ENCODE measurements at regions of chr11 and their contacts with region 1.

Region 1: GRCh38 chr11:108222686-108223448 is at the start of gene ATM:
- DNase-seq: peak; percentile 99 to 100
- ATAC-seq: peak; percentile 91 to 92
- H3K4me3 ChIP-seq: peak within 1 kb of the TSS; percentile 59 to 92 (median 88)
- H3K27ac ChIP-seq: peak within 1 kb of the TSS; percentile 86 to 99 (median 96)
- H3K4me1 ChIP-seq: peaks cover 27 to 40% of the 10 kb centered on the region in 2 donors
- H3K27me3 ChIP-seq: no peaks in the 10 kb centered on the region
- CTCF ChIP-seq: peak; percentile 38 to 77 (median 56)
- POLR2A ChIP-seq: peak; percentile 6 to 33
- total RNA-seq, gene ATM: 9.3 to 21.6 (median 15.9) TPM

Region 2: DNA sequence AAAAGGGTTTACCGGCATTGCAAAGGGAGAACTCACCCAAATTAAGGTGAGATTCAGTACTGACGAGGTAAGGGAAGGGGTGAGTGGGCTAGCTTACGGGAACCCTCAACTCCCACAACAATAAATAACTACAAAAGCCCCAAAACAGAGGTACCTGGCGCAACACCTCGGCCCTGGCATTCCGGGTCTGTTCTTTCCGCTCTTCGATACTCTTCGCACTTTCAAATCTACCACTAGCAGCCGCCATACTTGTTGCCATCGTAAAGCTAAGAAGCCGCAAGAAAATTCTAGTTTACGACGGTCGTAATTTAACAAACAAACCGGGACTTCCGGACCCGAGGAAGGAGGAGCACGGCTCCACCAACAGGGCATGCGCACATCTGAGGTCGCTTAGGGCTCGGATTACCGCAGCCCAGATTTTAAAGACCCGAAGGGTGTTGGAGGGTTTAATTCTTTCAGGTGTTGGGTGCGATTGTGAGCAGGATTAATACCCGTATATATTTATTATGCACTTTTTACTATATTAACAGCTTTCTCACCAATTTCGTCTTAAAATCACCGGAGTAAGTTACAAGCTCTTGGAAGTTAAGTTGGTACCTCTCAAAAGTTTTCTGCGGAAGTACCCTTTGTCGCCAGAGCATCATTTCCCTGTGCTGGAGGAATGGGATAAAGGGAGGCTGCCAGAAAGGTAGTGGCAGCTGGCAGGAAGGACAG is 765.2 kb before region 1 on chr11 and contains the start of gene CWF19L2:
- in situ Hi-C with region 1: no loop called
- intact Hi-C with region 1: loop called (anchors 10 kb)
- DNase-seq: peak; percentile 77 to 87
- ATAC-seq: peak; percentile 100
- H3K4me3 ChIP-seq: peak within 1 kb of the TSS; percentile 76 to 92 (median 82)
- H3K27ac ChIP-seq: peak within 1 kb of the TSS; percentile 78 to 85 (median 80)
- H3K4me1 ChIP-seq: peaks cover 13 to 17% of the 10 kb centered on the region in 2 donors
- H3K27me3 ChIP-seq: no peaks in the 10 kb centered on the region
- CTCF ChIP-seq: peak in 1 of 5 experiments; percentile 11
- POLR2A ChIP-seq: no peak
- total RNA-seq, gene CWF19L2: 6.5 to 17.4 (median 9.8) TPM

Region 3: GRCh38 chr11:107713009-107713408 is 509.9 kb before region 1 on chr11:
- in situ Hi-C with region 1: no loop called
- intact Hi-C with region 1: loop called (anchors 5 kb)
- DNase-seq: no peak
- ATAC-seq: peak; percentile 50 to 63
- H3K4me3 ChIP-seq: peak overlapping the region; percentile 46 to 74 (median 54)
- H3K27ac ChIP-seq: peak overlapping the region; percentile 83 to 93 (median 86)
- H3K4me1 ChIP-seq: peaks cover 25 to 38% of the 10 kb centered on the region in 2 donors
- H3K27me3 ChIP-seq: no peaks in the 10 kb centered on the region
- CTCF ChIP-seq: no peak
- POLR2A ChIP-seq: no peak

Region 4: GRCh38 chr11:108121274-108122155 is 101.4 kb before region 1 on chr11 and contains the start of gene ACAT1:
- in situ Hi-C with region 1: loop called in 2 of 4 experiments (anchors 10 kb)
- intact Hi-C with region 1: loop called (anchors 1 kb)
- DNase-seq: peak; percentile 96 to 99
- ATAC-seq: peak; percentile 72 to 82
- H3K4me3 ChIP-seq: peak within 1 kb of the TSS; percentile 63 to 84 (median 76)
- H3K27ac ChIP-seq: peak within 1 kb of the TSS; percentile 89 to 99 (median 93)
- H3K4me1 ChIP-seq: peaks cover 34 to 42% of the 10 kb centered on the region in 2 donors
- H3K27me3 ChIP-seq: no peaks in the 10 kb centered on the region
- CTCF ChIP-seq: peak; percentile 39 to 84 (median 60)
- POLR2A ChIP-seq: peak; percentile 98
- total RNA-seq, gene ACAT1: 288 to 950 (median 605) TPM

Region 5: DNA sequence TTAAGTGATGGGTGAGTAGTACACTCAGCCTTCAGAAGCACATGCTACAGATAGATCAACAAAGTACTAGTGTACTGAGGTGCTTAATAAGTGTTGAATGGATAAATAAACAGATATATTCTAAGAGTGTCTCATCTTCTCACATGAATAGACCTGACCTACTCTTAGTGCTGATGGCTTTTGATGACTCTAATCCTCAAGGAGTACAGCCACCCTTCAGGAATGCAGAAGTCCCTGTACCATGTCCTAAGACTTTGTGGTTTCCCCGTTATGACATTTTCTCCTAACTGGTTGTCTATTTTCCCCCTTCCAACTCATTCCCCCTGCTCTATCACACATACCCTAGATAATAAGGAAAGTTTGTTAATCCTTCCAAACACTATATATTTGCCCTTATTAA is 182.8 kb after region 1 on chr11:
- in situ Hi-C with region 1: no loop called
- intact Hi-C with region 1: no loop called
- DNase-seq: no peak
- ATAC-seq: no peak
- H3K4me3 ChIP-seq: no peak overlapping the region
- H3K27ac ChIP-seq: no peak overlapping the region
- H3K4me1 ChIP-seq: no peaks in the 10 kb centered on the region
- H3K27me3 ChIP-seq: no peaks in the 10 kb centered on the region
- CTCF ChIP-seq: no peak
- POLR2A ChIP-seq: no peak

Region 6: GRCh38 chr11:108664730-108665525 is 442.1 kb after region 1 on chr11 and contains the start of gene DDX10:
- in situ Hi-C with region 1: no loop called
- intact Hi-C with region 1: loop called (anchors 2 kb)
- DNase-seq: peak; percentile 98
- ATAC-seq: peak; percentile 98
- H3K4me3 ChIP-seq: peak within 1 kb of the TSS; percentile 67 to 88 (median 74)
- H3K27ac ChIP-seq: peak within 1 kb of the TSS; percentile 80 to 89 (median 82)
- H3K4me1 ChIP-seq: peaks cover 20 to 23% of the 10 kb centered on the region in 2 donors
- H3K27me3 ChIP-seq: no peaks in the 10 kb centered on the region
- CTCF ChIP-seq: peak in 3 of 5 experiments; percentile 8 to 26 (median 20)
- POLR2A ChIP-seq: peak; percentile 65 to 82
- total RNA-seq, gene DDX10: 5.0 to 15.0 (median 10.5) TPM

Measured in gastrocnemius medialis (tissue), 4 donors.